Mammary epithelial cell (primary cell): ENCODE measurements at regions of chr7 and their contacts with region 1.

Region 1: DNA sequence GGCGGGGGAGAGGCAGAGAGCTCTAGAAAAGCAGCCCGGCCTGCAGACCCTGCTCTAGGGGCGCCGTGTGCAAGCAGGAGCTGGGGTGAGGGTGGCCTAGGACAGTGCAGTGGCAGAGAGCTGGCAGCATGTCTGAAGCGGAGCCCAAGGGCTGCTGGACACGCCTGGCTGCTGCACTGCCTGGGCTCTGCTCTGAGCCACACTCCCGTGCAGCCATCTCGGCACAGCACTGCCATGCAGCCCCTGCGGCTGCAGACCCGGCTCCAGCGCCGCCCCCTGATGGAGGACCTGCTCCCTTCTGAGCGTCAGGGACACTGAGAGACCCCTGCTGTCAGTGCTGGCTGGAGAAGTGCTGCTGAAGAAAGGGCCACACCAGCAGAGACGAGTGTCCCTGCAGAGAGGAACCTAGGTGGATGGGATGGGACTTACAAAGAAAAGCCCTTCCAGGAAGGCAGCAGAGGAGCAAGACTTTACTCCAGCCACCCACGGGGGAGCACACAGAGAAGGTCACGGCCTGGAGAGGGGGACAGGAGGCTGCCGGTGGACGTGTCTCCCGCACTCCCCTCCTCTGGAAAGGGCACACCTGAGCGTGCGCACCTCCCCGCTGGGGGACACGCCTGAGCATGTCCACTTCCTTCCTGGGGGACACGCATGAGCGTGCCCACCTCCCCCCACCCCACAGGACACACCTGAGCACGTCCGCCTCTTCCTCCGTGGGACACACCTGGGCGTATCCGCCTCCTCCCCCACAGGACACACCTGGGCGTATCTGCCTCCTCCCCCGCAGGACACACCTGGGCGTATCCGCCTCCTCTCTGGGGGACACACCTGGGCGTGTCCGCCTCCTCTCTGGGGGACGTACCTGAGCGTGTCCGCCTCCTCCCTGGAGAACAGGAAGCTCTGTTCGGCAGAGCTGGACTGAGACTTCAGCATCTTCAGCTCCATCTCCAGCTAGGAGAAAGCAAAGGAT is 252.9 kb downstream of the MAD1L1 start:
- DNase-seq: no peak
- H3K4me3 ChIP-seq: no peak overlapping the region
- H3K27ac ChIP-seq: no peak overlapping the region
- H3K4me1 ChIP-seq: peaks cover 7% of the 10 kb centered on the region
- H3K27me3 ChIP-seq: no peaks in the 10 kb centered on the region
- CTCF ChIP-seq: no peak

Region 2: DNA sequence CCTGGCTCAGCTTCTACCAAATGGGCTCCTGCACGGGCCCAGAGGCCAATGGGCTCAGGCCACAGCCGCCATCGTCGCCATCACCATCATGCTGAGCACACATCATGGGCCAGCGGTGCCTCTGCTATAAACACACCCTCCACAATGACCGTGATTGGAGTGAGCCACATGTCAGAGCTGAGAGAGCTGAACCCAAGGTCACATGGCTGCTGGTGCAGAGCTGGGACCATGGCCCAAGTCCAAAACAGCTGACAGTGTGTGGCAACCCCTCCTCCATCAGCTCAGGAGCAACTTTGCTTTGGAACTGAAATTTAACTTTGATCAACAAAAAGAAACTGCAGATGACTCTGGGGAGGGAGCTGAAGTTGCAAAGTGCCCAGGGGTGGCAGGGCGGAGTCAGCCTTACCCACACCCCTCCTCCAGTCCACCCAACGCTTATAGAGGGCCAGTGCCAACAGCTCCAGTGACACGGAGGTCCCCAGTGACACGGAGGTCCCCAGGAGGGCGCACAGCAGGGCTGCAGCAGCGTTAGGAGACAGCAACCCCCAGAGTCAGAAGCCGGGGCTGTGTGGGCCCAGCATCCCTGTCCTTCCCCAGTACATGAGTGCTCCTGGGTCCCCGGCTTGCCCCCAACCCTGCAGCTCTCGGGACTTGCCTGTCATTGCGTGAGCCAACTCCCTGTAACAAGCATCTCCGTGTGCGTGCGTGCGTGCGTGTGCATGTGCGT is 60.2 kb before region 1 on chr7:
- CTCF ChIA-PET with region 1: no interaction called
- dilution Hi-C with region 1: loop called (anchors 5 kb)
- in situ Hi-C with region 1: no loop called
- intact Hi-C with region 1: no loop called
- DNase-seq: no peak
- H3K4me3 ChIP-seq: no peak overlapping the region
- H3K27ac ChIP-seq: no peak overlapping the region
- H3K4me1 ChIP-seq: peaks cover 12% of the 10 kb centered on the region
- H3K27me3 ChIP-seq: no peaks in the 10 kb centered on the region
- CTCF ChIP-seq: no peak

Region 3: GRCh38 chr7:2072042-2072441 is 92.2 kb after region 1 on chr7:
- CTCF ChIA-PET with region 1: no interaction called
- dilution Hi-C with region 1: loop called (anchors 10 kb)
- in situ Hi-C with region 1: no loop called
- intact Hi-C with region 1: no loop called
- DNase-seq: no peak
- H3K4me3 ChIP-seq: no peak overlapping the region
- H3K27ac ChIP-seq: no peak overlapping the region
- H3K4me1 ChIP-seq: no peaks in the 10 kb centered on the region
- H3K27me3 ChIP-seq: no peaks in the 10 kb centered on the region
- CTCF ChIP-seq: no peak

Region 4: GRCh38 chr7:2720582-2721491 is 741.0 kb after region 1 on chr7:
- CTCF ChIA-PET with region 1: no interaction called
- dilution Hi-C with region 1: no loop called
- in situ Hi-C with region 1: no loop called
- intact Hi-C with region 1: no loop called
- DNase-seq: peak; percentile 33
- H3K4me3 ChIP-seq: no peak overlapping the region
- H3K27ac ChIP-seq: no peak overlapping the region
- H3K4me1 ChIP-seq: peaks cover 6% of the 10 kb centered on the region
- H3K27me3 ChIP-seq: no peaks in the 10 kb centered on the region
- CTCF ChIP-seq: no peak